ENCODE measurements at regions of chr1 and their contacts with region 1.

Region 1: GRCh38 chr1:151584278-151584677 is 27.6 kb upstream of the SNX27 start:
- DNase-seq: no peak
- H3K4me3 ChIP-seq: no peak overlapping the region
- CTCF ChIP-seq: no peak

Region 2: DNA sequence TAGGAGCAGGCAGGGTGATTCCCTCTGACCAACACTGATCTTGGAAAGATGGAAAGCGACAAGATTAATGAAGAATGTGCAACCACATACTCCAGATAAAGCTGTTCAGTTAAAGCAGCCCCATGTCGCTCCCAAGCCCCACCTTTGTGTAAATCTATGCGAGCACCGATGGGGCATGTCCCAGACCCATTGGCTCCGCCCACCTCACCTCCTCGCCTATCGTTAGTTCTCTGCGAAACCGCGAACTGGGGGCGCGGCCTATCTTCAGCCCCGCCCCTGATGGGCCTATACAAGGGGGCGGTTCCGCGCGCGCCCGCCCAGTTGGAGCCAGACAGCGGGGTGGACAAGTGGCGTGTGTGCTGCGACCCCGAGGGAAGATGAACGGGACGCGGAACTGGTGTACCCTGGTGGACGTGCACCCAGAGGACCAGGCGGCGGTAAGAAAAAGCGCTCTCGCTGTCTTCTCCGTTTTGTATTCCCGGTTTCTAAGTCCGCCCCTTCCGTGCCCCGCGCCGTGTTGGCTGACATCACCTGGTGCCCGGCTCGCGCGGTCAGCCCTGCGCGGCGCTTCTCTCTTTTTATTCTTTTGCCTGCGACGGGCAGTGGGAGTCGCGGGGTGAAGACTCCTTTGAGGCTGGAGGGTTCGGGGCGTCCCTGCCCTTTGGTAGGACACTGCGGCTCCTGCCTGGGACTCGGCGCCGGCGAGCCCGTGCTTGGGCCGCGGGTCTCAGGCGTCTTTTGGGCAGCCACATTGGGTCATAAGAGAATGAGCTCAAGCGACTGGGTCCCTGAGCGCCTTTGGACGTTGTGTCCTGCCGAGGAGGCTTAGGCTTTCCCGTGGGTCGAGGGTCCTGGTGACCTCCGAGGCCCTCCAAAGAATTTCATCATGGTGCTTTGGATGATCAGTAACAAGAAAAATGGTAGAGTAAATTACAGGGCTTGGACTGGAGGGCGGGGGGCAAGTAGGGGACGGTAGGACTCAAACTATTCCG is 44.0 kb before region 1 on chr1 and contains the start of gene TUFT1:
- in situ Hi-C with region 1: loop called (anchors 5 kb)
- DNase-seq: peak; percentile 72
- H3K4me3 ChIP-seq: peak within 1 kb of the TSS; percentile 81
- CTCF ChIP-seq: no peak